ENCODE measurements at regions of chr9 and their contacts with region 1.

Region 1: DNA sequence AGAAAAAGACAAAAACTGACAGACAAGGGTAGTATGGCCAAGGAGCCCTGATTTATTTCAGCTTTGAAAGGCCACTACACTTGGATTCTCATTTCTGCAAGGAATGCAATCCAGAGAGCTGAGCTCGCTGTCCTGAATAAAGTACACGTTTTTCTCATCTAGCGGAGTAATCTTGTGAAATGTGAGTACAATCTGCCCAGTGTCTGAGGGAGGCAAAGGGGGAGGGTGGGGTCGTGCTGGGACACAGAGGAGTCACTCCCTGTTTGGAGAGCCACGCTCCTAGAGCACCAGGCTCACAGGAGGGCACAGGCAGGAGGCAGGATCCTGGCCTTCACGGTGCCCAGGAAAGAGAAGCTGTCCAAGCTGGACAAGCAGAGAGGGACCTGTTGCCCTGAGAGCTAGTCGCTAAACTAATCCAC is 51.0 kb upstream of the IFNK start:
- DNase-seq: no peak
- H3K4me3 ChIP-seq: no peak overlapping the region
- H3K27ac ChIP-seq: no peak overlapping the region
- H3K4me1 ChIP-seq: no peaks in the 10 kb centered on the region
- H3K27me3 ChIP-seq: no peaks in the 10 kb centered on the region
- CTCF ChIP-seq: no peak

Region 2: GRCh38 chr9:27094640-27095298 is 378.4 kb before region 1 on chr9:
- CTCF ChIA-PET with region 1: no interaction called
- POLR2A ChIA-PET with region 1: interaction called, 12 read pairs
- intact Hi-C with region 1: no loop called
- DNase-seq: peak in 1 of 2 experiments; percentile 31
- H3K4me3 ChIP-seq: no peak overlapping the region
- H3K27ac ChIP-seq: no peak overlapping the region
- H3K4me1 ChIP-seq: no peaks in the 10 kb centered on the region
- H3K27me3 ChIP-seq: no peaks in the 10 kb centered on the region
- CTCF ChIP-seq: no peak

Region 3: GRCh38 chr9:27371382-27371781 is 101.7 kb before region 1 on chr9:
- CTCF ChIA-PET with region 1: no interaction called
- POLR2A ChIA-PET with region 1: interaction called, 17 read pairs
- intact Hi-C with region 1: no loop called
- DNase-seq: peak in 1 of 2 experiments; percentile 6
- H3K4me3 ChIP-seq: peak overlapping the region; percentile 29; the same call in 1 of the 2 replicates
- H3K27ac ChIP-seq: 0 out of 2 replicates have a peak overlapping the region, but pooled peaks have one; percentile 29
- H3K4me1 ChIP-seq: 0 out of 2 replicates have a peak, but pooled peaks cover 4% of the 10 kb centered on the region
- H3K27me3 ChIP-seq: no peaks in the 10 kb centered on the region
- CTCF ChIP-seq: no peak

Measured in PC-9 (cell line).